ENCODE measurements at regions of chr7 and their contacts with region 1.

Region 1: GRCh38 chr7:106285051-106285854 is 470 bp upstream of the NAMPT start:
- DNase-seq: peak; percentile 100
- ATAC-seq: peak; percentile 87
- H3K4me3 ChIP-seq: peak overlapping the region; percentile 79 to 100 (median 89)
- H3K4me3 Mint-ChIP-seq: peak overlapping the region; percentile 97
- H3K27ac ChIP-seq: peak overlapping the region; percentile 84 to 87
- H3K27ac Mint-ChIP-seq: peak overlapping the region; percentile 98
- H3K4me1 ChIP-seq: peaks cover 10 to 20% of the 10 kb centered on the region in 2 donors
- H3K4me1 Mint-ChIP-seq: peaks cover 31% of the 10 kb centered on the region
- H3K27me3 ChIP-seq: no peaks in the 10 kb centered on the region
- H3K27me3 Mint-ChIP-seq: no peaks in the 10 kb centered on the region
- CTCF ChIP-seq: no peak

Region 2: GRCh38 chr7:105531792-105532671 is 753.2 kb before region 1 on chr7 and contains the start of gene RINT1:
- CTCF ChIA-PET with region 1: no interaction called
- POLR2A ChIA-PET with region 1: no interaction called
- intact Hi-C with region 1: loop called (anchors 1 kb)
- DNase-seq: peak; percentile 95
- ATAC-seq: peak; percentile 97
- H3K4me3 ChIP-seq: peak within 1 kb of the TSS; percentile 81 to 98 (median 88)
- H3K4me3 Mint-ChIP-seq: peak within 1 kb of the TSS; percentile 92
- H3K27ac ChIP-seq: peak within 1 kb of the TSS; percentile 74 to 91
- H3K27ac Mint-ChIP-seq: peak within 1 kb of the TSS; percentile 97
- H3K4me1 ChIP-seq: peaks cover 18 to 22% of the 10 kb centered on the region in 2 donors
- H3K4me1 Mint-ChIP-seq: peaks cover 24% of the 10 kb centered on the region
- H3K27me3 ChIP-seq: no peaks in the 10 kb centered on the region
- H3K27me3 Mint-ChIP-seq: no peaks in the 10 kb centered on the region
- CTCF ChIP-seq: peak; percentile 84
- total RNA-seq, gene RINT1: 27.2 and 28.0 TPM in 2 replicates

Region 3: GRCh38 chr7:105691733-105692564 is 593.3 kb before region 1 on chr7:
- CTCF ChIA-PET with region 1: no interaction called
- POLR2A ChIA-PET with region 1: interaction called, 4 read pairs
- intact Hi-C with region 1: loop called (anchors 5 kb)
- DNase-seq: peak; percentile 90
- ATAC-seq: peak; percentile 77
- H3K4me3 ChIP-seq: peak overlapping the region; percentile 61 to 94 (median 80)
- H3K4me3 Mint-ChIP-seq: peak overlapping the region; percentile 95
- H3K27ac ChIP-seq: peak overlapping the region; percentile 90 to 97
- H3K27ac Mint-ChIP-seq: peak overlapping the region; percentile 99
- H3K4me1 ChIP-seq: peaks cover 5 to 29% of the 10 kb centered on the region in 2 donors
- H3K4me1 Mint-ChIP-seq: peaks cover 54% of the 10 kb centered on the region
- H3K27me3 ChIP-seq: no peaks in the 10 kb centered on the region
- H3K27me3 Mint-ChIP-seq: no peaks in the 10 kb centered on the region
- CTCF ChIP-seq: no peak

Region 4: GRCh38 chr7:106176414-106177299 is 108.6 kb before region 1 on chr7:
- CTCF ChIA-PET with region 1: interaction called, 8 read pairs
- POLR2A ChIA-PET with region 1: no interaction called
- intact Hi-C with region 1: loop called (anchors 5 kb)
- DNase-seq: peak; percentile 74
- ATAC-seq: peak; percentile 69
- H3K4me3 ChIP-seq: no peak overlapping the region
- H3K4me3 Mint-ChIP-seq: no peak overlapping the region
- H3K27ac ChIP-seq: no peak overlapping the region
- H3K27ac Mint-ChIP-seq: no peak overlapping the region
- H3K4me1 ChIP-seq: peaks cover 5 to 13% of the 10 kb centered on the region in 2 donors
- H3K4me1 Mint-ChIP-seq: peaks cover 11% of the 10 kb centered on the region
- H3K27me3 ChIP-seq: peaks cover 0 to 6% (median 5%) of the 10 kb centered on the region in 4 experiments
- H3K27me3 Mint-ChIP-seq: peaks cover 13% of the 10 kb centered on the region
- CTCF ChIP-seq: peak; percentile 96

Region 5: GRCh38 chr7:106717955-106718871 is 433.0 kb after region 1 on chr7:
- CTCF ChIA-PET with region 1: no interaction called
- POLR2A ChIA-PET with region 1: no interaction called
- intact Hi-C with region 1: loop called (anchors 5 kb)
- DNase-seq: peak; percentile 73
- ATAC-seq: peak; percentile 91
- H3K4me3 ChIP-seq: peak overlapping the region in 1 of 5 experiments; percentile 37
- H3K4me3 Mint-ChIP-seq: no peak overlapping the region
- H3K27ac ChIP-seq: peak overlapping the region; percentile 20 to 43
- H3K27ac Mint-ChIP-seq: no peak overlapping the region
- H3K4me1 ChIP-seq: peaks cover 65 to 76% of the 10 kb centered on the region in 2 donors
- H3K4me1 Mint-ChIP-seq: peaks cover 47% of the 10 kb centered on the region
- H3K27me3 ChIP-seq: no peaks in the 10 kb centered on the region
- H3K27me3 Mint-ChIP-seq: no peaks in the 10 kb centered on the region
- CTCF ChIP-seq: no peak

Measured in B cell (primary cell).